HEK293T (cell line): ENCODE measurements at regions of chr19 and their contacts with region 1.

Region 1: DNA sequence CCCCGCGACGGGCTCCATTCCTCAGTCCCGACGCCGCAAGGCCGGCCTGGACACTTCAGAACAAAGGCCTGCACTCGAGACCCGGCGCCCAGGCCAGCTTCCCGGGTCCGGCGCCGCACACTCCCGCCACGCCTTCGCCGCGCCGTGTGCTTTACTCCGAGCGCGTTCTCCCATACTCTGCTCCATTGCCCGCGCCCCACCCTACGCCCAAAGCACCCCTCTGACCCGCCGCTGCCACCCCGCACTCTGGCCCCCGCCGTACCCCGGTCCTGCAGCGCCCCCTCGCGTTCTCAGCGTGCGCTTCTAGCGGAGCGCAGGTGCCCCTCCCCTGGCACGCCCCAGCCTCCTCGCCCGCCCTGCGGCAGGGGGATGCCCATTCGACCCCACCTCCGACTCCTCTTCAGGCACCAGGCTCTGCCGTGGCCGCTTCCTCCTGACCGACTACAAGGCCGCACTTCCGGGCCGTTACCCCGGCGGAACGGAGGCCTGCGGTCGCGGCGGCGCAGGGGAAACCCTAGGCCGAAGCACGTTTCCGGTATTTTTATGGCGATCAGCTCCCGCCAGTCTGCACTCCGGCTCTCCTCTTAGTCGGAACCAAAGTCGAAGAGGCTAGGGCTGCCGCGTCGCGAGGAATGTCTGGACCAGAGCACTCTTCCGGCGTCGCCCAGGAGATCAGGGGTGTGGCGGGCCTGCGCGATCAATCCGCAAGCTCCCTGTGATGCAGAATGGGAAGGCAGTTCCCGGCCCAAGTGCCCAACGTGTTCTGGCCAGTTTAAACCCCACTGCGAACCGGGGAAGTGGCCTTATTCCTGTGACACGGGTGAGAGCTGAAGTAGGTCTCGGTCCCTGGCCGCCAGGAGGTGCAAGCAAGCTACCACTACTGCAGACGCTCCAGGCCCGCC is at the start of gene ZBTB45:
- DNase-seq: peak; percentile 87

Region 2: DNA sequence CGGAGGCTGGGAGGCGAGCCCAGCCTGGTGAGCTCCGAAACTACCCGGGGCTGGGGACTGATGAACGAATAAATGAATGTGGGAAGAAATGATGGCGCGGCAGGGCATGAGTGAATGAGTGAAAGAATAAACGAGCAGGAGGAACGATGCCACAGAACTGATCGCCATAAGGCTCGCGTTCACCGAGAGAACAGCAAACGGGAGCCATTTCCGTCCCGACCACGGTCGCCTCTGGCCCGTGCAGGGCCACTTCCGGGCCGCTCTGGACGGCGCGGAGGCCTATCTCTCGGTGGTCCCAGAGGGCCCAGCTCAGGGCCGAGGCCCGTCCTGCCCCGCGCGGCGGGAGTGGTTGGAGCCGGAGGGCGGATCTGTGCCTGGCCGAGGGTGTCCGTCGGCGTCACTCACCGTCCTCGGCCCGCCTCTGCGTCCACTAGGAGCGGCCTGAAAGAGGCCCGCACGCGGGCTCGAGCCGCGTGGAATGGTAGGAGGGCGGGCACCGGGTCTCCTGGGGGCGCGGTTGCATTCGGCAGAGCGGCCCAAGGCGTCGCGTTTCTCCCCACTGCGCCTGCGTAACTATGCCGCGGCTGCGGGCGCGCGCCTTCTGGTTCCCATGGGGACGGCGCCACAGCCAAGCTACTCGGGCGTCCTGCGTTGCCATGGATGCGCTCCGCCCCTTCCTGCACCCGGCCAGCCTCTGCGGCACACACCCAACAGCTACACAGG is 157.2 kb before region 1 on chr19 and contains the start of gene ZNF497:
- CTCF ChIA-PET with region 1: no interaction called
- POLR2A ChIA-PET with region 1: interaction called, 10 read pairs
- DNase-seq: peak; percentile 99

Region 3: DNA sequence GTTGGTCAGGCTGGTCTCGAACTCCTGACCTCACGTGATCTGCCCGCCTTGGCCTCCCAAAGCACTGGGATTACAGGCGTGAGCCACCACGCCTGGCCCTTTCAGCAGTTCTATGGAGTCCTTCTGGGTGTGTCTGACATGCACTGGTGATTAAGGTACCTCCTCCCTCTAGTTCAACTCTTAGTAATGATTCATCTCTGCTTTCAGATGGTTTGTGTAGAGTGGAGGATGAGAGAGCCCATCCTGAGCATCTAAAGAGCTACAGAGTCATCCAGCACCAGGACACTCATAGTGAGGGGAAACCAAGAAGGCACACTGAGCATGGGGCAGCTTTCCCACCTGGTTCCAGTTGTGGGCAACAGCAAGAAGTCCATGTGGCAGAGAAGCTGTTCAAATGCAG is 103.0 kb before region 1 on chr19:
- CTCF ChIA-PET with region 1: no interaction called
- POLR2A ChIA-PET with region 1: no interaction called
- DNase-seq: no peak

Region 4: DNA sequence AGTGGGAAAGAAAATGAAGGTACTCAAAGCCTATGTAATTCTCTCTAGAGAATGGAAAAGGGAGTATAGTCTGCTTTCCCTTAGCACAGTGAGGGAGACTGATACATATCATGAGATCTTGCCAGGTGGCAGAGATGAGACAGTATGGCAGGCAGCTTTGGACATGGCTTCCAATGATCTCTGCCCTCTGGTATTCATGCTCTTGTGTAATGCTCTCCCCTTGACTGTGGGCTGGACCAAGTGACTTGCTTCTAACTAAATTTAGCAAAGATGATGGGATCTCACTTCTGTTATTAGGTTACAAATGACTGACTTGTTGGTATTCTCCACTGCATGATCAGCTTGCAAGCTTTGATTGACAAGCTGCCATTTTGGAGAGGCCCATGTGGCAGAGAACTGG is 89.9 kb before region 1 on chr19:
- CTCF ChIA-PET with region 1: no interaction called
- POLR2A ChIA-PET with region 1: no interaction called
- DNase-seq: no peak

Region 5: GRCh38 chr19:58439576-58440554 is 79.7 kb before region 1 on chr19 and contains the start of gene ZNF132:
- CTCF ChIA-PET with region 1: no interaction called
- POLR2A ChIA-PET with region 1: no interaction called
- DNase-seq: no peak

Region 6: GRCh38 chr19:58475714-58476497 is 43.7 kb before region 1 on chr19 and contains the start of gene ZNF446:
- CTCF ChIA-PET with region 1: interaction called, 3 read pairs
- POLR2A ChIA-PET with region 1: interaction called, 14 read pairs
- DNase-seq: peak; percentile 92

Region 7: GRCh38 chr19:58538257-58539168 is 18.9 kb after region 1 on chr19:
- CTCF ChIA-PET with region 1: interaction called, 9 read pairs
- POLR2A ChIA-PET with region 1: interaction called, 96 read pairs
- DNase-seq: no peak

Region 8: GRCh38 chr19:58558623-58559274 is 39.1 kb after region 1 on chr19:
- CTCF ChIA-PET with region 1: interaction called, 4 read pairs
- POLR2A ChIA-PET with region 1: interaction called, 58 read pairs
- DNase-seq: peak; percentile 94

Region 9: GRCh38 chr19:58581227-58582151 is 61.9 kb after region 1 on chr19:
- CTCF ChIA-PET with region 1: interaction called, 8 read pairs
- POLR2A ChIA-PET with region 1: interaction called, 21 read pairs
- DNase-seq: peak; percentile 85